Activated naive CD4-positive, alpha-beta T cell treated with anti-CD3 and anti-CD28 coated beads, Interleukin-2, amount 10 ng/mL, durations not matched to agents 7 days and 5 days (primary cell): ENCODE measurements at regions of chr1 and their contacts with region 1.

Region 1: DNA sequence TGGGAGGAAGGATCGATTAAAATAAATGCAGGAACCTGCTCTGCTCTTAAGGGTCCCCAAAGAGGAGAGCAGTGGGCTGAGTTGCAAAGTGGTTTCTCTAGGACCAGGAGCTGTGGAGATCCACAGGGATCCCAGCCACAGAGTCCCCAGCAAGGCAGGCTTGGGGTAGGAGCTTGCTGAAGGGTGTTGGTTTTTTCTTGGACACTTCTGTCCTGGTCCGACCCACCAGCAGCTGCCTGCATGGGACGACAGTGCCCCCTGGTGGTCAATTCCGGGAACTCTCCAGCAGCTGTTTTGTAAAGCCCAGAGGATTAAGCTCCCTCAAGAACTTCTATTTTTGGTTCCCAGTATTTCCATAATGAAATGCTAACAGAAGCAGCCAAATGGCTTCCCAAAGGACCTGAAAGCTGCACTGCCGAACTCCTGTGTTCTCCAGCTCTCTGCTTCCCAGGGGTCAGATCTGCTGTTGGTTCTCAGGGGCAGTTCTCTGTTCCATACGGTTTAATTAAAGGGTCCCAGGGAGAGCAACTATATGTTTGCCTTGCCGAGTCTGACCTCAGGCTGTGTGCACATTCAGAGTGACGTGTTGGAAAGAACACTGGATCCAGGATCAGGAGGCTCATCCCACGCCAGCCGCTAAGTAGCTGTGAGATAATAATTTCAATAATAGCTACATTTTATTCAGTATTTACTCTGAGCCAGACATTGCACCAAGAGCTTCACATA is 23.2 kb downstream of the NENF start:
- DNase-seq: peak; percentile 89
- H3K4me3 Mint-ChIP-seq: no peak overlapping the region
- H3K27ac Mint-ChIP-seq: no peak overlapping the region
- H3K4me1 Mint-ChIP-seq: peaks cover 12% of the 10 kb centered on the region
- H3K27me3 Mint-ChIP-seq: peaks cover 11% of the 10 kb centered on the region

Region 2: DNA sequence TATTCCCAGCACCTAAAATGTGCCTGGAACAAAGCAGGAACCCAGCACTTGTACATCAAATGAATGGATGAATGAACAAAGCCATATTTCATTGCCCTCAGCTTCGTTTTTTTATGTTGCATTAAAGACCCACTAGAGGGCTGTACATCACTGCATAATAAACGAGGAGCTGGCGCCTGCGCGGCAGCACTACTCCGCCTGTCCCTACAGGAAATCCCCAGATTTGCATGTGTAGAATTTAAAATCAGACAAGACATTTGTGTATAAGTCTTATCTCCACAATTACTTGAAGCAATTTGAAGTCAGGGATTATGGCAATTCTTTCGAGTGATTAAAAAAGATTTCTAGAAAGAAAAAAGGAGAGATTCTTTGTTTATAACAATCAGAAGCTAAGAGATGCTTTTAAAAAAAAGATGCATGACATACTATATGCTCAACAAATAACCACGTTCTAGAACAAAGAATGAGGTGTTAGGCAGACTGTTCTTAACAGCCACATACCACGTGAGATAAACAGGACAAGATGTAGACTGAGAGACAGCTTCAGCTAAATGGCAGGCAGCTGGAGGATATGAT is 775.1 kb before region 1 on chr1:
- CTCF ChIA-PET with region 1: interaction called, 108 read pairs
- DNase-seq: peak; percentile 77
- H3K4me3 Mint-ChIP-seq: no peak overlapping the region
- H3K27ac Mint-ChIP-seq: peak overlapping the region; percentile 73
- H3K4me1 Mint-ChIP-seq: peaks cover 21% of the 10 kb centered on the region
- H3K27me3 Mint-ChIP-seq: no peaks in the 10 kb centered on the region

Region 3: DNA sequence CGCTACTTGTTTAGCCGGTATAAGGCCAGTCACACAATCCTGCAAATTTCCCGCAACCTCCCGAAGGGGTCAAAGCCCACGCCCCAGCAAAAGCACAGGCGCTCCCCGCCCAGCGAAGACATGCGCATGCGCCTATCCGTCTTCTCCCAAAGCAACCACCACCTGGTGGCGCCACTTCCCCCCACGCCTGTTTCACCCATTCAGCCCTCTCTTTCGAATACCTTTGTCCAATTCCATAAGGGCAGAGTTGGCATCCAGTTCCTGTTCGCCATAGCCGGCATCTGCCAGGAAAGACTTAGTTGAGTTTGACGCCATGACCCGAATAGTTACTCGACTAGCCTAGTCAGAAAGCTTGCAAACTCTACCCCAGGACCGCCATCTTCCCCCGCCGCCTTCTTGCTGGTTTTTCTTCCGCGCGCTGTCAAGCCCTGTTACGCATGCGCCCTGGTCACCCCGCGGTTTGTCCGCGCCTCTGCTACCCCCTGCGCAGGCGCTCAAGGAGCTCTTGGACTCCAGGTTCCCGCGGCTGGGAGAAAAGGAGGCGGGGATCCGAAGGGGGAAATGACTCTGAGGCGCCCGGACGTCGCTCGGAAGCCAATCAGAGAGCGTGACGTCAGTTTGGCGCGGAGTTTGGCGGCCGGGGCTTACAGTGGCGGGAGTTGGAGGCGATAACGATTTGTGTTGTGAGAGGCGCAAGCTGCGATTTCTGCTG is 420.7 kb before region 1 on chr1 and contains the starts of genes DTL and INTS7:
- CTCF ChIA-PET with region 1: interaction called, 14 read pairs
- DNase-seq: peak; percentile 99
- H3K4me3 Mint-ChIP-seq: peak within 1 kb of the TSS; percentile 93
- H3K27ac Mint-ChIP-seq: peak within 1 kb of the TSS; percentile 96
- H3K4me1 Mint-ChIP-seq: peaks cover 72% of the 10 kb centered on the region
- H3K27me3 Mint-ChIP-seq: no peaks in the 10 kb centered on the region

Region 4: DNA sequence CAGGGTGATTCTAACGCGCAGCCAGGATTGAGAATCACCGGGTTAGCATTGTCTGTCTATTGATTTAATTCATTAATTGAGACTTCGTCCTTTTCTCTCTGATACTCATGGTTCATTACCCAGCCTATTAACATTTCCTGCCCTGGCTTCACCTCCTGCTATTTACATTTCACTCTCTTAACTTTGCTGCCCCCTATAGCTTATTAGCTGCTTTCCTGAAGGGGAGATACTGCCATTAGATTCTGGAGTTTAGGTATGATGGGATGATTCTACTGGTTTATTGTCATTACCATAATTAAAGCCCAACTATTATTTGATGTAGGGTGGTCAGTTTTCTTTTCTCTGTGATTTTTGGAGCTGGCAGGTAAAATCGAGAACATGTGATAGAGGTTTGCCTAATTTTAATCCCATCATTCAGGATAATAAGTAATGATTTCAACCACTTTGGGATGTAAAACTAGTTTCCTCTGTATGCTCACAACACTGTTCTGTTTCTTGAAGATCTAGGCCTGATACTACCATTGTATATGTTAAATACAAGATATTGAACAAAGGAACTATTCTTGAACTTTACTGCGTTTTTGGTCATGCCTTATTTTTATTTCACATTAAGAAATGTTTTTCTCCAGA is 164.3 kb before region 1 on chr1:
- CTCF ChIA-PET with region 1: interaction called, 12 read pairs
- DNase-seq: no peak
- H3K4me3 Mint-ChIP-seq: peak overlapping the region; percentile 0
- H3K27ac Mint-ChIP-seq: peak overlapping the region; percentile 17
- H3K4me1 Mint-ChIP-seq: peaks cover 72% of the 10 kb centered on the region
- H3K27me3 Mint-ChIP-seq: no peaks in the 10 kb centered on the region

Region 5: DNA sequence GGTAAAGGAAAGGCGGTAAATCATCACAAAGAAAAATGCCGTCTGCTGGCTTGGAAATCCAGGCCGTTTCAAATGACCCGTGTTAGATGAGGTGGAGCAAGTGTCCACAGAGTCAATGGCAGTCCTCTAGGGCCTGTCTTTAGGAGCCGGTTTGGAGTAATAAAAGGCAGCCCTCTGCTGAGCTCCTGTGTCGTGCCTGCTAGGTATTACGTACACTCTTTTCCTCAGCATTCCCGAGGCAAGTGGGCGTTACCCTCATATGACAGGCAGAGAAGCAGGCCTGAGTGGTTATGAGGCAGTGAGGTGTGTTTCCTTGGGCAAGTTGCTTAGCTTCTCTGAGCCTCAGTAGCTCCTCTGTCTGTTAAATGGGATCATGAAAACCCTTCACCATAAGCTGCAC is 15.5 kb before region 1 on chr1:
- CTCF ChIA-PET with region 1: interaction called, 24 read pairs
- DNase-seq: no peak
- H3K4me3 Mint-ChIP-seq: no peak overlapping the region
- H3K27ac Mint-ChIP-seq: no peak overlapping the region
- H3K4me1 Mint-ChIP-seq: no peaks in the 10 kb centered on the region
- H3K27me3 Mint-ChIP-seq: no peaks in the 10 kb centered on the region

Region 6: GRCh38 chr1:212665241-212666115 is 209.5 kb after region 1 on chr1:
- CTCF ChIA-PET with region 1: interaction called, 16 read pairs
- DNase-seq: peak; percentile 85
- H3K4me3 Mint-ChIP-seq: peak overlapping the region; percentile 73
- H3K27ac Mint-ChIP-seq: no peak overlapping the region
- H3K4me1 Mint-ChIP-seq: peaks cover 10% of the 10 kb centered on the region
- H3K27me3 Mint-ChIP-seq: peaks cover 12% of the 10 kb centered on the region